Activated T-helper 2 cell treated with anti-CD3 and anti-CD28 coated beads, Interferon-gamma antibody, Interleukin-2, Interleukin-4, amounts not matched to agents 10 μg/mL and 5 μg/mL and 100 μg/mL, durations not matched to agents 14 hours and 24 hours and 36 hours (primary cell): ENCODE measurements at regions of chr2 and their contacts with region 1.

Region 1: DNA sequence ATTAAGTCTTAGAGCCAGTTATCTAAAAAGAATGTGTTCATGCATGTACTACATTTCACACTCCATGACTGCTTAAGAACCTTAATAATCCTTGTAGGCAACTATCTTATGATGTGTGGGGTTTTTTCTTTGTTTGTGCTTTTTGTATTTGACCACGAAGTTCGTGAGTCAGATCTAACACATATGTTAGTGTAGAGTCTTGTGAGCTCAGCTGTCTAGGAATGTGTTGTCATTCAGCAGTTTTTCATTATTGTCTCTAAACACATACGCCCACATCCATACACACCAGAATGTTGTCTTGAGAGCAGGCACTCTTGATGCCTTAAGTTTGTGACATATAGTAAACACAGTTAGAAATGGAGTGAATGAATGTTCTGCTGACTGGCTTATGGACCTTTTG is 38.4 kb downstream of the CAB39 start:
- DNase-seq: no peak
- H3K4me3 Mint-ChIP-seq: no peak overlapping the region
- H3K27ac Mint-ChIP-seq: peak overlapping the region; percentile 77
- H3K4me1 Mint-ChIP-seq: peaks cover 70% of the 10 kb centered on the region
- H3K27me3 Mint-ChIP-seq: no peaks in the 10 kb centered on the region

Region 2: GRCh38 chr2:230732914-230733401 is 18.1 kb before region 1 on chr2:
- intact Hi-C with region 1: loop called (anchors 2 kb)
- DNase-seq: no peak
- H3K4me3 Mint-ChIP-seq: no peak overlapping the region
- H3K27ac Mint-ChIP-seq: peak overlapping the region; percentile 11
- H3K4me1 Mint-ChIP-seq: peaks cover 58% of the 10 kb centered on the region
- H3K27me3 Mint-ChIP-seq: no peaks in the 10 kb centered on the region